WTC11 (cell line): ENCODE measurements at regions of chr7 and their contacts with region 1.

Region 1: DNA sequence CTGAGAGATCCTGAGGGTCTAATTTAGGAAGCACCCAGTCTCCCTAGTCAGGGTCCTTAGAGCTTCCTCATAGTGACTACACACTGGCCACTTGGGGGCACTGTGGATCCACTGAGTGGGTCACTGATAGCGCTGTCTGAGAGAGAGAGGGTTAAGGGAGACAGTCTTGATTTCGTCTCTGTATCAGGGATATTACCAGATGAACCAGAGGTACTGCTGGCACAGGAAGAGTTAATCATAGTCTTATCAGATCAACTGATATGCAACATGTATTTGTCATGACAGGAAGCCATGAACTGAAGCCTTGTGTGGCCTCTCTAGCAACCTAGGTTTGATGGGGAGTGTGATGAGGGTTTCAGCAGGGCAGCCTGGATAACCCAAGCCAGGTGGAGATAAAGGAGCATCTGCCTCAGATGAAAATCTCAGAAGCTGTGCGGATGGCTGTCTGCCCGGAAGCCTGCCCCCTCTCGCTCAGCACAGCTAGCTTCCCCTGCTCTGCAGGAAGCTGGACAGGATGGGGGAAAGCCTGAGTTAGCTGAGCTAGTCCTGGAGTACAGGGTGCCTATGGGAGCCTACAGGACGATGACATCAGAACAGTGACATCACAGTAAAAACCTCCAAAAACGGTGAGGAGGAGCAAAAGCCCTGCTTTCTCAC is 214.0 kb upstream of the PRSS1 start:
- DNase-seq: peak; percentile 86
- ATAC-seq: peak; percentile 100
- H3K4me3 Mint-ChIP-seq: peak overlapping the region; percentile 42; the same call in 1 of the 2 replicates
- H3K27ac Mint-ChIP-seq: 0 out of 2 replicates have a peak overlapping the region, but pooled peaks have one; percentile 42
- H3K4me1 Mint-ChIP-seq: peaks cover 4% of the 10 kb centered on the region
- H3K27me3 Mint-ChIP-seq: peaks cover 5% of the 10 kb centered on the region; the same call in 1 of the 2 replicates
- CTCF ChIP-seq: peak; percentile 70

Region 2: DNA sequence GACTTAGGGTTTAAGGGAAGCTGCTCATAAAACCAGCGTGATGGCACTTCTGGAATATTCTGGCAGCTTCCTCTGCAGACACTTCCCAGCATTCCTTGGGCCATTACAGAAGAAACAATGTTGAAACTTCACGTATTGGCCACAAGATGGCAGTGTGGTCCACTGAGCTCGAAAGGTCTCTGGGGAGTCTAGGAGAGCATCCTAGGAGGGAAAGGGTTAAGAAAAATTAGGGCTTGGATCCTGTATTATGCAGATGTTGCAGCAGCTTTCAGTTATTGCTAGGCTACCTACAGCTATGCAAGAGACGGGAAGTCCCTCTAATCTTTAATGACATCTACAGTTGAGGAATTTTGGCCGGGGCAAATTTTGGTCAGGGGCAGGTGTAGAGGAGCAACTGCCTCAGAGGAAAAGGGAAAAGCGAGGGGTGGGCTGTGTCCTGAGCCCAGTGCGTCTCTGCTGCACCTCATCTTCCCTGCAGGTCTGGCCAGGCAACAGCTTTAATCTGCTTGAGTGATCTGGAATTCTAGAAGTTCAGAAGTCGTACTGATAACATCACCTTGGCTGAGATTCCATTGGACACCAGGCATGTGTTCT is 56.7 kb before region 1 on chr7:
- CTCF ChIA-PET with region 1: interaction called, 13 read pairs
- POLR2A ChIA-PET with region 1: no interaction called
- DNase-seq: peak; percentile 38
- ATAC-seq: peak; percentile 79
- H3K4me3 Mint-ChIP-seq: no peak overlapping the region
- H3K27ac Mint-ChIP-seq: no peak overlapping the region
- H3K4me1 Mint-ChIP-seq: peaks cover 11% of the 10 kb centered on the region
- H3K27me3 Mint-ChIP-seq: peaks cover 12% of the 10 kb centered on the region
- CTCF ChIP-seq: peak; percentile 62

Region 3: GRCh38 chr7:142516038-142516501 is 19.2 kb before region 1 on chr7:
- CTCF ChIA-PET with region 1: interaction called, 13 read pairs
- POLR2A ChIA-PET with region 1: no interaction called
- DNase-seq: peak; percentile 26
- ATAC-seq: peak; percentile 92
- H3K4me3 Mint-ChIP-seq: no peak overlapping the region
- H3K27ac Mint-ChIP-seq: no peak overlapping the region
- H3K4me1 Mint-ChIP-seq: peaks cover 9% of the 10 kb centered on the region
- H3K27me3 Mint-ChIP-seq: peaks cover 5% of the 10 kb centered on the region; the same call in 1 of the 2 replicates
- CTCF ChIP-seq: peak; percentile 41; the same call in 1 of the 2 replicates

Region 4: GRCh38 chr7:142546452-142546851 is 11.2 kb after region 1 on chr7:
- CTCF ChIA-PET with region 1: interaction called, 20 read pairs
- POLR2A ChIA-PET with region 1: no interaction called
- DNase-seq: no peak
- ATAC-seq: no peak
- H3K4me3 Mint-ChIP-seq: no peak overlapping the region
- H3K27ac Mint-ChIP-seq: no peak overlapping the region
- H3K4me1 Mint-ChIP-seq: no peaks in the 10 kb centered on the region
- H3K27me3 Mint-ChIP-seq: no peaks in the 10 kb centered on the region
- CTCF ChIP-seq: no peak

Region 5: DNA sequence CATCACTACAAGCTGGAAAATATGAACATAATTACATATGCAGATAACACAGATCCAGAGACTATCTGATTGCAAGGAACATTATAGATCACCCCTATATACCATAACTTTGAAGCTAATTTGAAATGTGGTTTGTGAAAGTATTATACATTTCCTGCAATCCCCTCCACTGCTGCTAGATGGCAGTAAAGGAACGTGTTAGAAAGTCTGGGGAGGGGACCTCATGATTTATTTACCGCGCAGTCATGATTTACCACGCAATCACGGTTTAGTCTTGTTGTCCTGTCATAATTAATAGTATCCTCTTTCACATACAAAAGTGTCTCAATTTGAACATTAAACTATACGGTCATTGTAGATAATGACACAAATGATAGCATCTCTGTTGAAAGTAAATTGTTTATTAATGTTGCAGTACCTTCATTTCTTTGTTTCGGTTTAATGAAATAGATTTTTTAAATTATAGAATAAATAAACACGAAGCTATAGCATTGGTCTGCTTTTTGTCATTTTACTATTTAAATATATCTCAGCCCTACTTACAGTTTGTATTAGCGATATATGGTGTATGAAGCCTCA is 68.7 kb after region 1 on chr7:
- CTCF ChIA-PET with region 1: interaction called, 21 read pairs
- POLR2A ChIA-PET with region 1: no interaction called
- DNase-seq: peak; percentile 60
- ATAC-seq: peak; percentile 55
- H3K4me3 Mint-ChIP-seq: no peak overlapping the region
- H3K27ac Mint-ChIP-seq: no peak overlapping the region
- H3K4me1 Mint-ChIP-seq: 0 out of 2 replicates have a peak, but pooled peaks cover 2% of the 10 kb centered on the region
- H3K27me3 Mint-ChIP-seq: no peaks in the 10 kb centered on the region; the same call in 1 of the 2 replicates
- CTCF ChIP-seq: peak; percentile 42; the same call in 1 of the 2 replicates

Region 6: GRCh38 chr7:142811154-142811737 is 276.0 kb after region 1 on chr7:
- CTCF ChIA-PET with region 1: interaction called, 15 read pairs
- POLR2A ChIA-PET with region 1: no interaction called
- DNase-seq: no peak
- ATAC-seq: peak; percentile 22
- H3K4me3 Mint-ChIP-seq: no peak overlapping the region
- H3K27ac Mint-ChIP-seq: no peak overlapping the region; the same call in 1 of the 2 replicates
- H3K4me1 Mint-ChIP-seq: peaks cover 60% of the 10 kb centered on the region
- H3K27me3 Mint-ChIP-seq: peaks cover 12% of the 10 kb centered on the region
- CTCF ChIP-seq: peak; percentile 60